ENCODE measurements at regions of chr16 and their contacts with region 1.

Region 1: GRCh38 chr16:86874141-86874540 is 295.8 kb downstream of the FOXL1 start:
- DNase-seq: peak; percentile 20
- H3K4me3 ChIP-seq: no peak overlapping the region
- H3K27ac ChIP-seq: no peak overlapping the region
- H3K4me1 ChIP-seq: no peaks in the 10 kb centered on the region
- H3K27me3 ChIP-seq: no peaks in the 10 kb centered on the region
- CTCF ChIP-seq: peak; percentile 65 to 68

Region 2: DNA sequence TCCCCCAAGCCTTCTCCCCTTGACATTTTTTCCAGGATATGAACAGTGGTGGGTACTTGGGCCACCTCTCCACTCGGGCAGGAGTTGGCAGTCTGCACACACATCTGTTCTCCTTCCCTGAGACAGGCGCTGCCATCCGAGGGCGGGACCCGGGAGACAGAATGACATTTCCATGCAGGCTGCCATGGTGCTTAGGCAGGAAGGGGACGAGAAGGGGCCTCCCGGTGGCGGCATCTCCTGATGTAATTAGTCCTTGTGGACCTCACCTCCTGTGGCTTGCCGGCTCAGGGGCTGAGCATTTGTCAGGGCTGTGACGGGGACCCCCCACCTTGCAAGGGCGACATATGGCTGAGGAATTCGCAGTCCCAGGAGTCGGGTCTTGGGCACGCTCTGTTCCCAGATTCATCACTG is 98.6 kb before region 1 on chr16:
- CTCF ChIA-PET with region 1: no interaction called
- dilution Hi-C with region 1: loop called (anchors 5 kb)
- in situ Hi-C with region 1: no loop called
- intact Hi-C with region 1: no loop called
- DNase-seq: no peak
- H3K4me3 ChIP-seq: no peak overlapping the region
- H3K27ac ChIP-seq: no peak overlapping the region
- H3K4me1 ChIP-seq: peaks cover 22% of the 10 kb centered on the region
- H3K27me3 ChIP-seq: no peaks in the 10 kb centered on the region
- CTCF ChIP-seq: no peak

Region 3: GRCh38 chr16:86929057-86929871 is 55.1 kb after region 1 on chr16:
- CTCF ChIA-PET with region 1: no interaction called
- dilution Hi-C with region 1: loop called (anchors 5 kb)
- in situ Hi-C with region 1: no loop called
- intact Hi-C with region 1: no loop called
- DNase-seq: peak; percentile 54
- H3K4me3 ChIP-seq: no peak overlapping the region
- H3K27ac ChIP-seq: no peak overlapping the region
- H3K4me1 ChIP-seq: peaks cover 22% of the 10 kb centered on the region
- H3K27me3 ChIP-seq: no peaks in the 10 kb centered on the region
- CTCF ChIP-seq: no peak

Region 4: DNA sequence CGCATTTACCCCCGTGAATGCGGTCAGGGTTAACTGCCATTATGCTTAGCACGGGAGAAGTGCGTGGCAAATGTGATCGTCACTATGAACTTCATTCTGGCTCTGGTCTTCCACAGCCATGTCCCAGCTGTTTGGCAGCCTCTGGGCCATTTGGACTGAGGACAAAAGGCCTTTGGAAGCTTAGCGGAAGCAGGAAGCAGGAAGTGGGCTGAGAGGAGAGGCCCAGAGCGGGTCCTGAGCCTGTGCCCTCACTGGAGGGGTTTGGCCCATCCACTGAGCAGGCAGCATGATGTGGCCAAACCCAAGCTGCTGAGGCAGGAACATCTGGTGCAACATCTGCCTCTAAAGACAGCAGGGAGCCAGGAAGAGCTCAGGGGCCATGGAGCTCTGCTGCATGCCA is 97.1 kb after region 1 on chr16:
- CTCF ChIA-PET with region 1: no interaction called
- dilution Hi-C with region 1: loop called (anchors 5 kb)
- in situ Hi-C with region 1: no loop called
- intact Hi-C with region 1: no loop called
- DNase-seq: no peak
- H3K4me3 ChIP-seq: no peak overlapping the region
- H3K27ac ChIP-seq: no peak overlapping the region
- H3K4me1 ChIP-seq: peaks cover 3% of the 10 kb centered on the region
- H3K27me3 ChIP-seq: no peaks in the 10 kb centered on the region
- CTCF ChIP-seq: no peak

Region 5: GRCh38 chr16:87062569-87063442 is 188.7 kb after region 1 on chr16:
- CTCF ChIA-PET with region 1: no interaction called
- dilution Hi-C with region 1: no loop called
- in situ Hi-C with region 1: no loop called
- intact Hi-C with region 1: loop called (anchors 5 kb)
- DNase-seq: peak; percentile 28
- H3K4me3 ChIP-seq: peak overlapping the region in 1 of 3 experiments; percentile 29
- H3K27ac ChIP-seq: no peak overlapping the region
- H3K4me1 ChIP-seq: no peaks in the 10 kb centered on the region
- H3K27me3 ChIP-seq: no peaks in the 10 kb centered on the region
- CTCF ChIP-seq: peak; percentile 70 to 86

Region 6: GRCh38 chr16:87278191-87279095 is 404.3 kb after region 1 on chr16:
- CTCF ChIA-PET with region 1: no interaction called
- dilution Hi-C with region 1: no loop called
- in situ Hi-C with region 1: no loop called
- intact Hi-C with region 1: loop called (anchors 10 kb)
- DNase-seq: peak; percentile 58
- H3K4me3 ChIP-seq: no peak overlapping the region
- H3K27ac ChIP-seq: no peak overlapping the region
- H3K4me1 ChIP-seq: no peaks in the 10 kb centered on the region
- H3K27me3 ChIP-seq: no peaks in the 10 kb centered on the region
- CTCF ChIP-seq: peak; percentile 85 to 93

Region 7: DNA sequence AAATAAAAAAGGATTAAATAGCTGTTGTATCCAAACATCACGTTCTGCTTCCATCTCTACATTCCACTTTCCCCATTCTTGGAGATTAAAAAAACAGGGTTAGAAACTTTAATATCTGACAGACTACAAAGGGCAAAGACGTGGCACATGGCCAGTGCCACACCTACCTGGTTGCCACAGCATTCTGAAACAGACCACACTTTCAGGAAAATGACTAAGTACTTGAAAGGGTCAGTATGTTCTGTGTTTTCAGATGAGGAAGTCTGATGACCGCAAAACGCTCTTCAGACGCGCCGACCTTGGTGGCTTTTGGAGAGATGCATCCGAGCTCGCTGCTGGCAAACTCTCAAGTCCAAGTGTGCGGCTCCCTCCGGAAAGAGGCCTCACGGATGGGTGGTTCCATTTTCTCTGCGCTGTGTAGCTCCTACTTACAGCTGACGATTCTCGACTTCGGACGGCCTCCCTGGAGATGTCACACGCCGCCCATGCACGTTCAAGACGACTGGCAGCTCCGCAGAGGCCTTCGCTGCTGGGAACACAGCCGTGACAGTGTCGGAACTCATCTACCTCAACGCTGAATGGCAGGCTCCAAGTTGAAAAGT is 533.5 kb after region 1 on chr16:
- CTCF ChIA-PET with region 1: no interaction called
- dilution Hi-C with region 1: no loop called
- in situ Hi-C with region 1: no loop called
- intact Hi-C with region 1: no loop called
- DNase-seq: peak; percentile 26
- H3K4me3 ChIP-seq: no peak overlapping the region
- H3K27ac ChIP-seq: no peak overlapping the region
- H3K4me1 ChIP-seq: no peaks in the 10 kb centered on the region
- H3K27me3 ChIP-seq: no peaks in the 10 kb centered on the region
- CTCF ChIP-seq: no peak

Measured in mammary epithelial cell (primary cell).